Sigmoid colon (tissue), 7 donors: ENCODE measurements at regions of chr7 and their contacts with region 1.

Region 1: GRCh38 chr7:101059627-101059942 is 25.7 kb upstream of the TRIM56 start:
- DNase-seq: no peak
- H3K4me3 ChIP-seq: no peak overlapping the region
- H3K27ac ChIP-seq: no peak overlapping the region
- H3K4me1 ChIP-seq: no peaks in the 10 kb centered on the region
- H3K27me3 ChIP-seq: peaks cover 0 to 59% (median 19%) of the 10 kb centered on the region in 3 donors
- CTCF ChIP-seq: no peak
- EP300 ChIP-seq: no peak
- POLR2A ChIP-seq: no peak

Region 2: GRCh38 chr7:100896732-100897608 is 162.6 kb before region 1 on chr7:
- intact Hi-C with region 1: loop called (anchors 1 kb)
- DNase-seq: no peak
- H3K4me3 ChIP-seq: peak overlapping the region in 3 of 4 donors; percentile 25 to 44 (median 39)
- H3K27ac ChIP-seq: no peak overlapping the region
- H3K4me1 ChIP-seq: peaks cover 0 to 31% (median 30%) of the 10 kb centered on the region in 4 donors
- H3K27me3 ChIP-seq: peaks cover 27 to 67% (median 45%) of the 10 kb centered on the region in 3 donors
- CTCF ChIP-seq: peak; percentile 24 to 68 (median 60)
- EP300 ChIP-seq: no peak
- POLR2A ChIP-seq: no peak

Region 3: GRCh38 chr7:100983451-100984187 is 76.0 kb before region 1 on chr7:
- intact Hi-C with region 1: no loop called
- DNase-seq: no peak
- H3K4me3 ChIP-seq: no peak overlapping the region
- H3K27ac ChIP-seq: peak overlapping the region in 3 of 4 donors; percentile 19 to 65 (median 37)
- H3K4me1 ChIP-seq: peaks cover 0 to 12% (median 3%) of the 10 kb centered on the region in 4 donors
- H3K27me3 ChIP-seq: no peaks in the 10 kb centered on the region
- CTCF ChIP-seq: no peak
- EP300 ChIP-seq: peak in 2 of 4 donors; percentile 34 to 70
- POLR2A ChIP-seq: no peak

Region 4: DNA sequence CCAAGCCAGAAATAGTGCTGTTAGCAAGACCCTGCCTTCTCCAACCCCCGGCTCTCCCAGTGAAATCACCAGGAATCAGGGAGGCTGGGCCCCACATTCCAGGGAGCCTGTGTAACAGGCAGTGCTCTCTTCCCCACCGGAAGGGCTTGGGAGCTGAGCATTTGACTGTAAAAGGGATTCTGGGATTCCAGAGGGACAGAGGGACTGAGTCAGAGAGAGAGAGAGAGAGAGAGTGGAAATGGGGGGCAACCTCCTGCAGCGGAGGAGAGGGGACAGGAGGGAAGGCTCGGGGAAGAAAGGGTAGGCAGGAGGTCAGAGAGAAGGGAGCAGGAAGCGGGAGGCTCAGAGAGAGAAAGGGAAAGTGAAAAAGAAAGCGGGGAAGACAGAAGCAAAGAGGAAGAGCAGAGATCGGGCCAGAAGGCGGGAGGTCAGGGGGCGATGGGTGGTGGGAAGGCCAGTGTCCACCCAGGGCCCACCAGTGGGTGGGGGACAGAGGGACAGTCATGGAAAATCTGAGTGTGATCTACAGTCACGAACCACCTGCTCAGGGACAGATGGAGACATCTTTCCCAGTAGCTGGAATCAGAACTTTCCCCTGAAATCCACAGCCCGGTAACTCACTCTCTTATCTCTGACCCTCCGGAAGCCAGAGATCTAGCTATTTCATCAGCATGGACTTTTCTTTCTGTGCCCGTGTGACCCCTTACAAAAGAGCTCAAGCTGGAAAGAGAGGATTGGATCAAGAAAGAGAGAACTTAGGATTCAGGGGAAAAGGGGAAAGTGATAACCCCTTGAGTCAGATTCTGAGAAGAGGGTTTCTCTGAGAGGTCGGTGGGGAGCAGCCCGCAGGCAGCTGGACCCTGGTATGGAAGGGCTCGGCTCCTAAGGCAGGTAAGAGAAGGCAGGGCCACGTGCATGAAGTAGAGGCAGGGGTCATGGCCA is 62.7 kb after region 1 on chr7:
- intact Hi-C with region 1: no loop called
- DNase-seq: peak; percentile 91
- H3K4me3 ChIP-seq: peak overlapping the region; percentile 15 to 47 (median 40)
- H3K27ac ChIP-seq: peak overlapping the region; percentile 80 to 90 (median 84)
- H3K4me1 ChIP-seq: peaks cover 0 to 78% (median 29%) of the 10 kb centered on the region in 4 donors
- H3K27me3 ChIP-seq: no peaks in the 10 kb centered on the region
- CTCF ChIP-seq: no peak
- EP300 ChIP-seq: peak in 1 of 4 donors; percentile 23
- POLR2A ChIP-seq: peak; percentile 19 to 26